A549 (cell line): ENCODE measurements at regions of chr2 and their contacts with region 1.

Region 1: GRCh38 chr2:25041928-25042320 is at the start of gene EFR3B:
- DNase-seq: peak; percentile 91 to 94
- ATAC-seq: peak; percentile 88 to 95
- H3K4me3 ChIP-seq: peak within 1 kb of the TSS; percentile 94
- H3K27ac ChIP-seq: peak within 1 kb of the TSS; percentile 90
- H3K4me1 ChIP-seq: peaks cover 28% of the 10 kb centered on the region
- CTCF ChIP-seq: 0 out of 3 replicates have a peak, but pooled peaks have one; percentile 2
- EP300 ChIP-seq: no peak
- POLR2A ChIP-seq: peak; percentile 57
- RAD21 ChIP-seq: no peak
- polyA plus RNA-seq, gene EFR3B: 6.5 and 8.1 TPM in 2 replicates

Region 2: DNA sequence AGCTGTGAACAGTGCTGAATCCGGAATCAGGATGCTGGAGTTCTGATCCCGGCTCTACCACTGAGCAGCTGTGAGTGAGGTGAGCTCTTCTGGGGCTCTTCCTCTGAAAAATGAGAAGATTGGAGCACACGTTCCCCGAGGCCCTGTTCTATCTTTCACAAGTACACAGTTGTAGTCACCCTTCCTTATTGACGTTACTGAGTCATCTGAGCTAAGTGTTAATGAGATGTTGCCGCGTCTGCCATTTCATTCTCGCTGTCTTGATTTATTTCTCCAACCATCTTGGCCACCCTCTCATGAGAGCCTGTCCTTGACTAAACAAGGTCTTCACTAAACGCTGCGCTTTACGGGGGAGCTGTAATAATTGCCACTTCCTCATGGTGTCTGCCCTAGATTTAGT is 32.0 kb before region 1 on chr2:
- CTCF ChIA-PET with region 1: no interaction called
- POLR2A ChIA-PET with region 1: interaction called, 11 read pairs
- DNase-seq: peak in 1 of 2 experiments; percentile 35
- ATAC-seq: peak; percentile 26 to 67; a peak in 3 of 6 replicates
- H3K4me3 ChIP-seq: no peak overlapping the region
- H3K27ac ChIP-seq: no peak overlapping the region
- H3K4me1 ChIP-seq: peaks cover 7% of the 10 kb centered on the region; the same call in 2 of the 3 replicates
- CTCF ChIP-seq: no peak
- EP300 ChIP-seq: no peak
- POLR2A ChIP-seq: no peak
- RAD21 ChIP-seq: no peak

Region 3: GRCh38 chr2:25103287-25103871 is 61.5 kb after region 1 on chr2:
- CTCF ChIA-PET with region 1: interaction called, 6 read pairs
- POLR2A ChIA-PET with region 1: interaction called, 15 read pairs
- DNase-seq: peak; percentile 43 to 82
- ATAC-seq: peak; percentile 61
- H3K4me3 ChIP-seq: no peak overlapping the region
- H3K27ac ChIP-seq: peak overlapping the region; percentile 81 to 89
- H3K4me1 ChIP-seq: peaks cover 60% of the 10 kb centered on the region
- CTCF ChIP-seq: no peak
- EP300 ChIP-seq: no peak
- POLR2A ChIP-seq: no peak
- RAD21 ChIP-seq: no peak